CD14-positive monocyte (primary cell): ENCODE measurements at regions of chr19 and their contacts with region 1.

Region 1: GRCh38 chr19:51830274-51830673 is 35.3 kb downstream of the FPR3 start:
- DNase-seq: peak; percentile 85 to 92 (median 92)
- H3K4me3 ChIP-seq: peak overlapping the region in 1 of 3 experiments; percentile 33
- H3K4me3 Mint-ChIP-seq: peak overlapping the region in 1 of 2 donors; percentile 72
- H3K27ac ChIP-seq: peak overlapping the region in 1 of 2 donors; percentile 79
- H3K27ac Mint-ChIP-seq: peak overlapping the region; percentile 83 to 94 (median 89)
- H3K4me1 ChIP-seq: peaks cover 24 to 25% of the 10 kb centered on the region in 2 donors
- H3K4me1 Mint-ChIP-seq: peaks cover 30% of the 10 kb centered on the region
- H3K27me3 ChIP-seq: peaks cover 4% of the 10 kb centered on the region in 2 donors
- H3K27me3 Mint-ChIP-seq: peaks cover 2 to 12% (median 3%) of the 10 kb centered on the region in 3 donors
- CTCF ChIP-seq: peak; percentile 87

Region 2: DNA sequence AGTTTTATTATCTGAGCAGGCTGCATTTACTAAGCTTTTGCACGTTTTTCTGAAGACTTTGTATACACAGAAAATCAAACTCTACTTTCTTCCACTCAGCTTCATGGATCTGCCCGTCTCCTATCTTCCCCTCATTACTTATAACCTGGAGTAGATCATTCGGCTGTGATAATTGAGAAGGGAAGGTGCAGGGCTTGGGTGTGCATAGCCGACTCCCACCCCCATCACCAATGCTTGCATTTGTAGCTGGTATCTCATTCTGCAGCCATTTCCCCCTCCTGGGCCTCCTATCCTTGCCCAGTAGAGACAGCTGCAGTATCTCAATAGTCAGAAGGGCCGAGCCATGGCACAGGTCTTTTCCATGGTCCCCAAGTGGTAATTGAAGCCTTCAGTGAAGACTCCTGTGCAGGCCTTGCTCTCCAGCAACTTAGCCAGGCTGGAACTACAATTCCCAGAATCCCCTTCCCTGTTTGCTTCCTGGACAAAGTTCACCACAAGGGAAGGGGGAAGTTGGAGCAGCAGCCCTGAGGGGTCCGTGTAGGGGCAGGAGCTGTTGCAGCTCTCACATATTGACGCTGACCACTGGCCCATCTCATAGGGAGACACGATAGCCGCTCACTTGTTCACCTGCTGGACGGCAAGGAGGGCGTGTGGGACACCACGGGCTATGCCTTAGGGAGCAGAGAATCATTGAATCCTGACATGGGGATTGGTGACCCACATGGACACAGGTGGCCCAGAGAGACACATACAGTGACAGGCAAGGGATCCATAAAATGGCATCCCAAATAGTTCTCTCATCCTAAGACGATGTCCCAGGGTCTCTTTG is 369.9 kb before region 1 on chr19:
- intact Hi-C with region 1: loop called in 1 of 2 experiments (anchors 10 kb)
- DNase-seq: peak; percentile 48 to 67 (median 62)
- H3K4me3 ChIP-seq: peak overlapping the region; percentile 13 to 62 (median 15)
- H3K4me3 Mint-ChIP-seq: peak overlapping the region; percentile 75 to 86
- H3K27ac ChIP-seq: peak overlapping the region in 1 of 2 donors; percentile 76
- H3K27ac Mint-ChIP-seq: peak overlapping the region in 6 of 7 donors; percentile 74 to 91 (median 84)
- H3K4me1 ChIP-seq: peaks cover 35 to 43% of the 10 kb centered on the region in 2 donors
- H3K4me1 Mint-ChIP-seq: peaks cover 47% of the 10 kb centered on the region
- H3K27me3 ChIP-seq: no peaks in the 10 kb centered on the region
- H3K27me3 Mint-ChIP-seq: peaks cover 2 to 25% (median 13%) of the 10 kb centered on the region in 3 donors
- CTCF ChIP-seq: no peak